ENCODE measurements at regions of chrX and their contacts with region 1.

Region 1: GRCh38 chrX:119606280-119607015 is at the start of gene NKRF:
- DNase-seq: peak; percentile 80
- H3K4me3 ChIP-seq: peak within 1 kb of the TSS; percentile 48 to 90 (median 85)
- H3K27ac ChIP-seq: peak within 1 kb of the TSS; percentile 62
- H3K4me1 ChIP-seq: peaks cover 4% of the 10 kb centered on the region
- H3K27me3 ChIP-seq: no peaks in the 10 kb centered on the region
- CTCF ChIP-seq: no peak
- total RNA-seq, gene NKRF: 5.7 to 13.5 TPM

Region 2: DNA sequence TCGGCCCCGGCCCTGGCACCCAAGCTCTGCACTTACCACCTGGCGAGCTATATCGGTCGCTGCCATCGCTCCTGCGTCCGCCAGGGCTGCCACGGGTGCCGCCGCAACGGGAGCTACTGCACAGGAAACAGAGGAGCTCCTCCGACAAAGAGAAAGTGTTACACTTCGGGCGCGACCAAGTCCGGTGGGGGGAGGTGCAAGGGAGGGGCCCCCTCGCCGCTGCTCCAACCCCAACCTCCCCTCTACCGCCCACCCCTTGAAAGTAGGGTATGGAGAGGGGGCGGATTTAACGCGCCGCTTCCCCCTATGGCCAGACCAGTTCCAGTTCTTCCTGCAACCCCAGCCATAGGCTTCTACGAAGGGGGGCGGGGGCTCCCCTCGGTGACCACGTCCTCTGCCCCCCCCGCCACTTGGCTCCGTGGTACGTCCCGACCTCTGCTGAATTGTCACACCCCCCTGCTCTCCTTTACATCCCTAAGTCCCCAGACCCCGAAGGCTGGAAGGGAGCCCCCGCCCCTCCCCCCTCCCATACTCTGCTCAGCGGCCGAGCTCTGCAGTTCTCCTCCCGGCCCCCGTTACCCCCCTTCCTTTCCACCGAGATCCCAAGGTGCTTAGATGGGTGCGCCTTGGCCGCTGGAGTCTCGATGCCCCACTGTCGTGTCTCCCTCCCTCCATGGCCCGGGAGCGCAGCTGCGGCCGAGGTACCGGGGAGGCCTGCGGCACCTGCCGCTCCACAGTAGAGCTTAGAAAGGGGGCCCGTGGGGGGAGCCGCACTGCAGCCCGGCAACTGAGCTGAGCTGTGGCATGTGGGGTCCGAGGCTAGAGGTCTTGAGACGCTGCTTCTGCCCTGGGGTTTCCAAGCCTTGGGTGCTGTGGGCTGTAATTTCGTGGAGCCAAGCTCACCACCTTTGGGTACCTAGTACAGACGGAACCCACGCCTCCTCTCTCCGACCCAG is 86.9 kb after region 1 on chrX and contains the start of gene SEPTIN6:
- CTCF ChIA-PET with region 1: interaction called, 5 read pairs
- dilution Hi-C with region 1: no loop called
- in situ Hi-C with region 1: no loop called
- intact Hi-C with region 1: loop called (anchors 2 kb)
- DNase-seq: peak; percentile 65
- H3K4me3 ChIP-seq: peak within 1 kb of the TSS; percentile 66 to 79 (median 70)
- H3K27ac ChIP-seq: peak within 1 kb of the TSS; percentile 29
- H3K4me1 ChIP-seq: peaks cover 8% of the 10 kb centered on the region
- H3K27me3 ChIP-seq: no peaks in the 10 kb centered on the region
- CTCF ChIP-seq: no peak
- total RNA-seq, gene SEPTIN6: 8.5 to 11.4 TPM

Region 3: DNA sequence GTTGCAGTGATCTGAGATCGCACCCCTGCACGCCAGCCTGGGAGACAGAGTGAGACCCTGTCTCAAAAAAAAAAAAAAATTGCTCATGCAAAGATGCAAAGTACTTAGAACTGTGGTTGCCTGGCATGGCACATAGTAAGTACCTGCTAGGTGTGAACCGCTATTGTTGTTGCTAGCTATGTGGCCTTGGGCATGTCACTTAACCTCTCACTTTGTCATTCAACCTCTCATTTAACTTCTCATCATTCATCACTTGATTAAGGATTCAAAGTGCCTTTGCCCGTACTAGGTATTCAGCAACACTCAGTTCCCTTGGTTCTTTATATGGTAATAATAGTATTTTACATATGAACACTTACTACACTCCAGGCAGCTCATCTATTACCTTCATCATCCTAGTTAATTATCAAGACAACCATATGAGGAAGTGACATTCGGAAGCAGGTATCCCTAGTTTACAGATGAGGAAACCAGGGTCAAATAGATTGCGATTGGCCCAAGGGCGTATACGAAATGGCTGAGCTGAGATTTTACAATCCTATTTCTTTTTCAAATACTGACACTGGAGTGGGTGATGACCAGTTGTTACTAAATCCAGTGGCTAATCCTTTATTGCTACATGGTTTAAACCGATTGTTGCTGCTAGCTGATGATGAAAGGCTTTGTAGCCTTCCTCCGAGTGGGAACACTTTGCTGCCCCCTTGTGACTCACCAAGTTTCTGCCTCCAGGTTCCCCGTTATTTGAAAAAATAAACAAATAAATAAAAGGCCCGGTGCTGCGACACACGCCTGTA is 123.2 kb after region 1 on chrX:
- CTCF ChIA-PET with region 1: interaction called, 3 read pairs
- dilution Hi-C with region 1: no loop called
- in situ Hi-C with region 1: no loop called
- intact Hi-C with region 1: loop called (anchors 1 kb)
- DNase-seq: peak; percentile 34
- H3K4me3 ChIP-seq: no peak overlapping the region
- H3K27ac ChIP-seq: no peak overlapping the region
- H3K4me1 ChIP-seq: no peaks in the 10 kb centered on the region
- H3K27me3 ChIP-seq: peaks cover 2% of the 10 kb centered on the region
- CTCF ChIP-seq: peak; percentile 32 to 57

Region 4: DNA sequence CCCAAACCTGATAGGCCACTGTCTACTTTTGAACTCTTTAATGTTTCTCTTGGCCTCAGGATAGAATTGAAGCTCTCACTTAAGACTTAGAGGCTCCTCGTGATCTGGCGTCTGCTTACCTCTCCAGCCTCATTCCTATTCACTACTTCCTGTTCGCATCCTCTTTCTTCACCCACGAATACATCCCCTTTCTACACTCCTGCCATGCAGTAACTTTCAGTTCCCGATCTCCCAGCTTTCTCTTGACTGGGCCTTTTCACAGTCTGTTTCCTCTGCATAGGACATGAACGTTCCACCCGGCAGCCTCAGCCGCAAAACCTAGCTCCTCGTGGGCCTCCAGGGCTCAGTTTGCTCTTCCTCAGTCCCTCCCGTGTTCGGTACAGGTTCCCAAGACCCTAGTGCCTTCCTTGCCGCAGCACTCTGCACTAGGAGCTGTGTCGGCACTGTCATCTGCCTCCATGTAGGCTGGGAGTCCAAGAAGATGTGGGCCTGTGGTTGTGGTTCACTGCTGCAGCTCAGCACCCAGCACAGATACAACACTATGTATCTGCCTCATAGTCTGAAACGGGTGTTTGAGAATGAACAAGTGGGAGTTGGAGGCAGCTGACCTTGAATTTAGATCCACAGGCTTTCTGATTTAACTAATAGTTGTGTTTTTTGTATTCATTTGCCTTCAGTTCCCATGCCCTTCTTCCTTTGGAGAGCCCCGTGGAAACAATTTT is 169.2 kb after region 1 on chrX:
- CTCF ChIA-PET with region 1: no interaction called
- dilution Hi-C with region 1: no loop called
- in situ Hi-C with region 1: no loop called
- intact Hi-C with region 1: loop called (anchors 5 kb)
- DNase-seq: no peak
- H3K4me3 ChIP-seq: no peak overlapping the region
- H3K27ac ChIP-seq: no peak overlapping the region
- H3K4me1 ChIP-seq: no peaks in the 10 kb centered on the region
- H3K27me3 ChIP-seq: no peaks in the 10 kb centered on the region
- CTCF ChIP-seq: no peak